ENCODE measurements at regions of chr15 and their contacts with region 1.

Region 1: DNA sequence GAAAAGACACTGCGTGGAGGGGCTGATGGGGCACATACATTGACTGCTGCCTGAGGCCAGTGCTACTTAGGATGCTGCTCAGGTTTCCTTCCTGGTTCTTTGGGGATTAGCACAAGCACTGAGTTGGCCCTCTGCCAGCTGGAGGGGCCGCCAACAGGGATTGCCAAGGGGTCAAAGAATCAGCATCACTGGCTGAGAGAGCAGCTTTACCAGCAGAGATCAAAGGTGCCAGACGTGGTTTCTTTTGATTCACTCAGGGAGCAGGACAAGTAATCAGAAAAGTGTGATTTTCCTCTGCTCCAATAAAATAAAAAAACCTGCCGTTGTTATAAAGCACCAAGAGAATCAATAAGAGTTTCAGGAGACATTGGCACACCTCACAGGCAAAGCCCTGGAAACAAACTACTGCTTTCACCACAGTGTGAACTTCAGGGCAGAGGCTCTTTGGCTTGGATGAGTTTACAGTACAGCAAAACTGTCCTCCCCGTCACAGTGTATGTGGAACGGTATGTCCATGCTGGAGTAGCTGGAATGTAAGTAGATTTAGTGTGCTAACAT is 45.8 kb upstream of the FSIP1 start:
- DNase-seq: no peak
- ATAC-seq: no peak
- H3K4me3 ChIP-seq: no peak overlapping the region
- H3K27ac ChIP-seq: no peak overlapping the region
- H3K4me1 ChIP-seq: no peaks in the 10 kb centered on the region
- H3K27me3 ChIP-seq: peaks cover 9 to 12% of the 10 kb centered on the region in 2 experiments; a peak in 3 of 5 replicates
- CTCF ChIP-seq: no peak
- EP300 ChIP-seq: no peak
- POLR2A ChIP-seq: no peak
- RAD21 ChIP-seq: no peak

Region 2: GRCh38 chr15:39845582-39845981 is 17.1 kb after region 1 on chr15:
- CTCF ChIA-PET with region 1: no interaction called
- POLR2A ChIA-PET with region 1: no interaction called
- in situ Hi-C with region 1: no loop called
- intact Hi-C with region 1: loop called (anchors 1 kb)
- DNase-seq: no peak
- ATAC-seq: no peak
- H3K4me3 ChIP-seq: no peak overlapping the region
- H3K27ac ChIP-seq: no peak overlapping the region
- H3K4me1 ChIP-seq: no peaks in the 10 kb centered on the region
- H3K27me3 ChIP-seq: no peaks in the 10 kb centered on the region
- CTCF ChIP-seq: no peak
- EP300 ChIP-seq: no peak
- POLR2A ChIP-seq: no peak
- RAD21 ChIP-seq: no peak